ENCODE measurements at regions of chr17 and their contacts with region 1.

Region 1: GRCh38 chr17:40559954-40560591 is 5.2 kb downstream of the CCR7 start:
- DNase-seq: peak; percentile 69 to 90 (median 84)
- ATAC-seq: peak; percentile 24
- H3K4me3 ChIP-seq: peak overlapping the region; percentile 71
- H3K4me3 Mint-ChIP-seq: peak overlapping the region; percentile 86
- H3K27ac ChIP-seq: peak overlapping the region; percentile 74 to 96
- H3K27ac Mint-ChIP-seq: peak overlapping the region; percentile 94
- H3K4me1 ChIP-seq: peaks cover 55% of the 10 kb centered on the region
- H3K4me1 Mint-ChIP-seq: peaks cover 90% of the 10 kb centered on the region
- H3K27me3 ChIP-seq: no peaks in the 10 kb centered on the region
- H3K27me3 Mint-ChIP-seq: no peaks in the 10 kb centered on the region
- CTCF ChIP-seq: peak; percentile 97

Region 2: GRCh38 chr17:40355123-40355803 is 204.8 kb before region 1 on chr17:
- CTCF ChIA-PET with region 1: interaction called, 10 read pairs
- POLR2A ChIA-PET with region 1: no interaction called
- intact Hi-C with region 1: loop called (anchors 1 kb)
- DNase-seq: peak; percentile 67 to 90 (median 80)
- ATAC-seq: peak; percentile 78
- H3K4me3 ChIP-seq: no peak overlapping the region
- H3K4me3 Mint-ChIP-seq: no peak overlapping the region
- H3K27ac ChIP-seq: no peak overlapping the region
- H3K27ac Mint-ChIP-seq: no peak overlapping the region
- H3K4me1 ChIP-seq: no peaks in the 10 kb centered on the region
- H3K4me1 Mint-ChIP-seq: peaks cover 13% of the 10 kb centered on the region
- H3K27me3 ChIP-seq: no peaks in the 10 kb centered on the region
- H3K27me3 Mint-ChIP-seq: no peaks in the 10 kb centered on the region
- CTCF ChIP-seq: peak; percentile 93

Region 3: GRCh38 chr17:40417609-40418427 is 142.3 kb before region 1 on chr17 and contains the start of gene TOP2A:
- CTCF ChIA-PET with region 1: interaction called, 10 read pairs
- POLR2A ChIA-PET with region 1: interaction called, 5 read pairs
- intact Hi-C with region 1: loop called in 1 of 2 experiments (anchors 1 kb)
- DNase-seq: peak; percentile 90 to 99 (median 95)
- ATAC-seq: peak; percentile 99
- H3K4me3 ChIP-seq: peak within 1 kb of the TSS; percentile 75
- H3K4me3 Mint-ChIP-seq: peak within 1 kb of the TSS; percentile 92
- H3K27ac ChIP-seq: peak within 1 kb of the TSS; percentile 42 to 49
- H3K27ac Mint-ChIP-seq: peak within 1 kb of the TSS; percentile 91
- H3K4me1 ChIP-seq: peaks cover 6% of the 10 kb centered on the region
- H3K4me1 Mint-ChIP-seq: peaks cover 17% of the 10 kb centered on the region
- H3K27me3 ChIP-seq: no peaks in the 10 kb centered on the region
- H3K27me3 Mint-ChIP-seq: peaks cover 3% of the 10 kb centered on the region
- CTCF ChIP-seq: no peak
- total RNA-seq, gene TOP2A: 2.9 TPM

Region 4: DNA sequence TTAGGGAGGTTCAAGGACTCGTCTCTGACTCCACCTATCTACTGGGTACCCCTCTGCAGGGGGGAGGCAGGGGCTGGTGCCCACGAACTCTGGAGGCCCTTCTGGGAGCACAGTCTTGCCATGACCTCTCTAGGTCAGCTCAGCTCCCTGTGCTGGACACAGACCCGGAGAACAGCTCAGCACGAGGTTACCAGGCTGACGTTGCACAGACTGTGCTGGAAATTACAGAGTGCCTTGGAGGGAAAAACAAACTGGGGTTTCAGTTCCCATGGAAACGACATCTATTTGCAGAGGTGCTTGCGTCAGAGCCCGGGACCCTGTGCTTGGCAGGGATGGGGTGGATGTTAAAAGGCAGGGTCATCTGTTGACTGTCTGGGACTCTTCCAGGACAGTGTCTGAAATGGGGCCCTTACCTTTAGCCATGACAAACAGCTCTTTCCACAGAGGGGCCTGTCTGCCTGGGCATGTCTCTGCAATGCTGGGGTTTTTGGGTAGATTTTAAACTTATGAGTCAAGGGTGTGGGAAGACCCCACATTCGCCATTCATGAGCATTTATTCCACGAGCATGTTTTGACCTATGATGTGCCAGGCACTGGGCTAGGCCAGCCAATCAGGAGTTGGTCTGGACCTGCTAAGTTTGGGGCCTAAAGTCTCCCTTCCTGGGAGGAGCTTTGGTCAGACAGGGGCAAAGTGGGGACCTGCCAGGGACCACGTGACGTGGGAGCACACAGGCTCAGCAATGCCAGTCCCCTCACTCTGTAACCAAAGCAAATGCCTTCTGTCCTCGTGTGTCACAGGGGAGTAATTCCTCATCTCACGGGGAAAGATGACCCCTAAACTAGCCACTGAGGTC is 17.3 kb before region 1 on chr17:
- CTCF ChIA-PET with region 1: interaction called, 470 read pairs
- POLR2A ChIA-PET with region 1: interaction called, 755 read pairs
- intact Hi-C with region 1: loop called (anchors 1 kb)
- DNase-seq: peak in 6 of 9 experiments; percentile 21 to 75 (median 58)
- ATAC-seq: peak; percentile 3
- H3K4me3 ChIP-seq: no peak overlapping the region
- H3K4me3 Mint-ChIP-seq: peak overlapping the region; percentile 72
- H3K27ac ChIP-seq: peak overlapping the region in 1 of 2 experiments; percentile 66
- H3K27ac Mint-ChIP-seq: peak overlapping the region; percentile 96
- H3K4me1 ChIP-seq: peaks cover 86% of the 10 kb centered on the region
- H3K4me1 Mint-ChIP-seq: peaks cover 88% of the 10 kb centered on the region
- H3K27me3 ChIP-seq: no peaks in the 10 kb centered on the region
- H3K27me3 Mint-ChIP-seq: no peaks in the 10 kb centered on the region
- CTCF ChIP-seq: no peak

Region 5: GRCh38 chr17:40598663-40599467 is 38.8 kb after region 1 on chr17:
- CTCF ChIA-PET with region 1: interaction called, 168 read pairs
- POLR2A ChIA-PET with region 1: interaction called, 251 read pairs
- intact Hi-C with region 1: loop called (anchors 1 kb)
- DNase-seq: peak in 8 of 9 experiments; percentile 48 to 95 (median 70)
- ATAC-seq: peak; percentile 66
- H3K4me3 ChIP-seq: peak overlapping the region; percentile 12 to 20
- H3K4me3 Mint-ChIP-seq: peak overlapping the region; percentile 69
- H3K27ac ChIP-seq: peak overlapping the region; percentile 82 to 92
- H3K27ac Mint-ChIP-seq: peak overlapping the region; percentile 100
- H3K4me1 ChIP-seq: peaks cover 98% of the 10 kb centered on the region
- H3K4me1 Mint-ChIP-seq: peaks cover 97% of the 10 kb centered on the region
- H3K27me3 ChIP-seq: no peaks in the 10 kb centered on the region
- H3K27me3 Mint-ChIP-seq: no peaks in the 10 kb centered on the region
- CTCF ChIP-seq: no peak

Region 6: GRCh38 chr17:40818733-40819527 is 258.9 kb after region 1 on chr17:
- CTCF ChIA-PET with region 1: interaction called, 3 read pairs
- POLR2A ChIA-PET with region 1: no interaction called
- intact Hi-C with region 1: loop called in 1 of 2 experiments (anchors 10 kb)
- DNase-seq: peak; percentile 70 to 94 (median 85)
- ATAC-seq: peak; percentile 76
- H3K4me3 ChIP-seq: peak overlapping the region; percentile 69 to 77
- H3K4me3 Mint-ChIP-seq: peak overlapping the region; percentile 91
- H3K27ac ChIP-seq: peak overlapping the region; percentile 70 to 79
- H3K27ac Mint-ChIP-seq: peak overlapping the region; percentile 95
- H3K4me1 ChIP-seq: peaks cover 17% of the 10 kb centered on the region
- H3K4me1 Mint-ChIP-seq: peaks cover 26% of the 10 kb centered on the region
- H3K27me3 ChIP-seq: peaks cover 0 to 3% of the 10 kb centered on the region in 2 experiments
- H3K27me3 Mint-ChIP-seq: peaks cover 10% of the 10 kb centered on the region
- CTCF ChIP-seq: no peak